Caco-2 (cell line): ENCODE measurements at regions of chr1 and their contacts with region 1.

Region 1: DNA sequence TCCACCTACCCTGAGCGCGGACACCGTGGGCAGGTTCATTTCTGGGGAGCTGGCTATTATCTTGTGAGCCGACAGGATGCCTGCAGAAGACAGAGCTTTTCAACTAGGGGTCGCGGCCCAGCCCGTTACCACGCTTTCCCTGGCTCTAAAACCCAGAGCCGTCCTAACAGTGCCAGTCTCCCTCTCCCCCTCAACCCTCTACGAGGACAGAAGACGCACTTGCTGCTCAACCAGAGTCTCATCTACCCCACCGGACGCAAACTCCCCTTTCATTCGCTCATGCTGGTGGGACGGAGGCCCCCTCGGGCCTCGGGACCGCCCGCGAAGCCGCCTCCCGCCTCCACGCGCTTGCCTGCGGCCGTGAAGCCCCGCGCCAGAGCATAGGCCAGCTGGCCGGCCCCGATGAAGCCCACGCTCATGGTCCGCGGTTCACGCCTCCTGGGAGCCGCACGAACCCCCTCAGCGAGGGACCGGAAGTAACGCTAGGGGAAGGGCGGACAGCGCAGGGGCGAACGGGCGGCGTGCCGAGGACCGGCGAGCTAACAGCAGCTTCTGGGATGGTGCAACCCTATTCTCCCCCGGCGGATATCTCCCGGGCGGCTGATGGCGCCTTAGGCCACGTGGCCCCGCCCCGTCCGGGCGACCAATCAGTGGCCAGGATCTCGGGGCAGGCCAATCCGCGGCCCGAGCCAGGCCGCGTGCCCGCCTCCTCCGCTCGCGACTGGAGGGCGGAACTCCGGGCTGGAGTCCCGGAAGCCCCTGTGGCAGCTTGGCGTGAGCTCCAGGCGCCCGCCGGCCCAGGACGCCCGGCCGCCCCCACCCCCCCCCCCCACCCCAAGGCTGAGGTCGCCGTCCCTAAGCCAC is at the start of gene PYCR2:
- DNase-seq: peak; percentile 95 to 98
- H3K4me3 ChIP-seq: peak within 1 kb of the TSS; percentile 81
- H3K4me3 Mint-ChIP-seq: peak within 1 kb of the TSS; percentile 95
- H3K27ac Mint-ChIP-seq: peak within 1 kb of the TSS; percentile 94
- H3K4me1 ChIP-seq: no peaks in the 10 kb centered on the region
- H3K4me1 Mint-ChIP-seq: no peaks in the 10 kb centered on the region
- H3K27me3 ChIP-seq: no peaks in the 10 kb centered on the region
- H3K27me3 Mint-ChIP-seq: no peaks in the 10 kb centered on the region
- CTCF ChIP-seq: no peak
- total RNA-seq, gene PYCR2: 69.7 and 73.7 TPM in 2 replicates

Region 2: DNA sequence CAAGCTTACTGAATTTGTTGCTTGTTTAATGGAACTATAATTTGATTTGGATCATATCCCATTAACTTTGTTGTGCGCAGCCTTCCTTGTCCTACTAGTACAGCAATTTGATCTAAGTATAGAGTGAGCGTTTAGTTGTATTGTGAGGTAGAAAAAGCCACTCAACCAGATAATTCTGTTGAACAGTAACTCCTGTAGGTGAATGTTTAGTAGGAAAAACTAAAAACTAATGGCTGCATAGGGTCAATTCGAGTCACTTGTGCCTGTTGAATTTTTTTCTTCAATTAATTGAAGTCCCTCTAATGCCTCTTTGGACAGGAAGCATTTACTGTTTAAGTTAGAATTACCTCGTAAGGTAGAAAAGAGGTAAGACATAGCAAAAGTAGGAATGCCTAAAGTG is 129.0 kb before region 1 on chr1:
- CTCF ChIA-PET with region 1: interaction called, 11 read pairs
- POLR2A ChIA-PET with region 1: no interaction called
- intact Hi-C with region 1: no loop called
- DNase-seq: no peak
- H3K4me3 ChIP-seq: no peak overlapping the region
- H3K4me3 Mint-ChIP-seq: no peak overlapping the region
- H3K27ac Mint-ChIP-seq: no peak overlapping the region
- H3K4me1 ChIP-seq: no peaks in the 10 kb centered on the region
- H3K4me1 Mint-ChIP-seq: no peaks in the 10 kb centered on the region
- H3K27me3 ChIP-seq: no peaks in the 10 kb centered on the region
- H3K27me3 Mint-ChIP-seq: no peaks in the 10 kb centered on the region
- CTCF ChIP-seq: no peak

Region 3: DNA sequence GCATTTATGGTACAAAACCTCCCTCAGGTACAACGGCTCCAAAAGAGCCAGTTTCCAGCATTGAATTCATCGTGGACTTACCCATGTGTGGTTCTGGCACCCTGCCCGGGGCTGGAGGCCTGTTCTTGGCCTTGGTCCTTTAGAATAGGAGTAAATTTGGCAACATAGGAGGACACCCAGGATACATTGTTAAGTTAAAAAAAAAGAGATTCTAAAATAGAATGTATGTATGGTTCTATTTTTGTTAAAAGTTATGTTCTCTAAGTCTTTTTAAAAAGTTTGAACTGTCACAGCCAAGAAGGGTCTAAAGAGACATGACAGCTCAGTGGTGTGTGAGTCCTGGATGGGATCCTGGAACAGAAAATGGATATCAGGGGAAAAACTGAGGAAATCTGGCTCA is 88.1 kb before region 1 on chr1:
- CTCF ChIA-PET with region 1: no interaction called
- POLR2A ChIA-PET with region 1: no interaction called
- intact Hi-C with region 1: no loop called
- DNase-seq: no peak
- H3K4me3 ChIP-seq: no peak overlapping the region
- H3K4me3 Mint-ChIP-seq: no peak overlapping the region
- H3K27ac Mint-ChIP-seq: no peak overlapping the region
- H3K4me1 ChIP-seq: no peaks in the 10 kb centered on the region
- H3K4me1 Mint-ChIP-seq: no peaks in the 10 kb centered on the region
- H3K27me3 ChIP-seq: no peaks in the 10 kb centered on the region
- H3K27me3 Mint-ChIP-seq: no peaks in the 10 kb centered on the region
- CTCF ChIP-seq: no peak

Region 4: DNA sequence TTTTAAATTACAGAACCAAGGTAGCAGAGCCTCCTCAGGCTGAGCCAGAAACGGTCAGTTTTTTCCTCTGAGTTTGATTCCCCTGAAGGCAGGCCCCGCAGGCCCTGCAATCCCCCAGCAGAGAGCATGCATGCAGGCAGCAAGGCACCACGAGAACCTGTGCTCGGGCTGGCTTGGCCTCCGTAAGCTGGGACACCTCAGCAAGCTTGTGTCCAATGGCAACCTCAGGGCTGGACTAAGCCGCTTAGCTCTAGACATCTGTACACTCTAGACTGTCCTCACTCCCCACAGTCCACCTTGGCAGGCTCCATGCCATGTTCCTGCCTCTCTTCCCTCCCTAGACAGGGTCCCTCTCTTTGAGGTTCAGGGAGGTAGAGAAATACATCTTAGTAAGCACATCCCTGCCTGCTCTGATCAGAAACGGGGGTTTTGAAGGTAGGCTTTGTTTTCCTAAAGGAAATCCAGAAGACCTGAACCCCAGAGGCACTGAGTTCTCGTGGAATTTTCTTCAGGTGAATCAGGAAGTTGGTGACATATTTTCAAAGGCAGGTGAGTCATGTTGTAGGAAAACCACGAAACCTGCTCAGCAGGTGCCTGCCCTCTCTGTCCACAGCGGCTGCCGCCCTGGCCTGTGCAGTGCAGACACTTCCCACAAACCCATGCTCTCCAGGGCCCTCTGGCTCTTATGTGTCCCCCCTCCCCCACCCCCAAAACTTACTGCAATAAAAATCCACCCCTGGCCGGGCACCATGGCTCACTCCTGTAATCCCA is 48.7 kb before region 1 on chr1:
- CTCF ChIA-PET with region 1: interaction called, 3 read pairs
- POLR2A ChIA-PET with region 1: interaction called, 17 read pairs
- intact Hi-C with region 1: no loop called
- DNase-seq: peak; percentile 77 to 79
- H3K4me3 ChIP-seq: no peak overlapping the region
- H3K4me3 Mint-ChIP-seq: peak overlapping the region; percentile 44
- H3K27ac Mint-ChIP-seq: peak overlapping the region; percentile 91
- H3K4me1 ChIP-seq: peaks cover 33% of the 10 kb centered on the region
- H3K4me1 Mint-ChIP-seq: peaks cover 23% of the 10 kb centered on the region
- H3K27me3 ChIP-seq: no peaks in the 10 kb centered on the region
- H3K27me3 Mint-ChIP-seq: no peaks in the 10 kb centered on the region
- CTCF ChIP-seq: no peak

Region 5: GRCh38 chr1:225881969-225882693 is 41.8 kb before region 1 on chr1 and contains the start of gene TMEM63A:
- CTCF ChIA-PET with region 1: interaction called, 8 read pairs
- POLR2A ChIA-PET with region 1: interaction called, 33 read pairs
- intact Hi-C with region 1: loop called (anchors 1 kb)
- DNase-seq: peak; percentile 92 to 95
- H3K4me3 ChIP-seq: peak within 1 kb of the TSS; percentile 91
- H3K4me3 Mint-ChIP-seq: peak within 1 kb of the TSS; percentile 95
- H3K27ac Mint-ChIP-seq: peak within 1 kb of the TSS; percentile 91
- H3K4me1 ChIP-seq: peaks cover 29% of the 10 kb centered on the region
- H3K4me1 Mint-ChIP-seq: peaks cover 24% of the 10 kb centered on the region
- H3K27me3 ChIP-seq: no peaks in the 10 kb centered on the region
- H3K27me3 Mint-ChIP-seq: no peaks in the 10 kb centered on the region
- CTCF ChIP-seq: peak in 1 of 2 experiments; percentile 30
- total RNA-seq, gene TMEM63A: 93.9 and 116 TPM in 2 replicates